Activated CD8-positive, alpha-beta T cell treated with anti-CD3 and anti-CD28 coated beads, Interleukin-2, amount 10 ng/mL, durations not matched to agents 7 days and 5 days (primary cell): ENCODE measurements at regions of chr14 and their contacts with region 1.

Region 1: GRCh38 chr14:61329478-61330051 is 8.2 kb downstream of the PRKCH start:
- DNase-seq: no peak
- ATAC-seq: no peak
- H3K4me3 Mint-ChIP-seq: peak overlapping the region; percentile 94
- H3K27ac Mint-ChIP-seq: peak overlapping the region; percentile 85
- H3K4me1 Mint-ChIP-seq: peaks cover 77% of the 10 kb centered on the region
- H3K27me3 Mint-ChIP-seq: no peaks in the 10 kb centered on the region

Region 2: DNA sequence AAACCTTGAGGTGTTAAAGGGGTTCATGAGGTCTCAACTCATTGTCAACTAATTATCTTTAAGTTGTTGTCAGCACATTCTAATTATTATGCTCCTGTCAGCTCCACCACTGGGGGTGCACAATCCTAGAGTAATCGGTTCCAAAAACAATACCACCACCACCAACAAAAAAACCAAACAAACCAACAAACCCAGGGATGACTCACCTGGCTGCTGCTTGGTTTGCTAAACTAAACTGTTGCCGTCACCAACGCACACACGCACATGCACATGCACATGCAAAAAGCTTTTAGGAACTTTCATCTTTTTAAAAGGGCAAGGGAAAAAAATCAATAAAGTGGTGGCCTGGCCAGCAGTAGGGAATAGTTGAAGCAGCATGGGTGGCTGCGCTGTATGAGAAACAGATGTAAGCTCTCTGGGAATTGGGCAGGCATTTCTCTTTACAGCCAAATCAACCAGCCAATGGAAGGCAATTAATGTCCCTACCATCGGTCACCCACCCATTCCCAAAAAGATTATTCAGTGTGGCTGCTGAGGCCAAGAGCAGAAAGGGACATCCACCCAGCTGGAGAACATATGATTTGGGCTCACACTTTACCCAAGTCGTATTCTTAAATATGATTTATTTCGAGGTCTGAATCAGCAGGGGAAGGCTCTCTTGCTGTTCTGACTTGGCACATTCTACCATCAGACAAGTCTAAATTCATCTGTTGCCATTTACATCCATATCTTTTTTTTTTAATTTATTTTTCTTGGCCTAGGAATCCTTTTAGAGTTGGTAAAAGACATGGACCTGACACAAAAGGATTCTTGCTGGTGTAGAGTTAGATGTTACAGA is 68.4 kb before region 1 on chr14:
- CTCF ChIA-PET with region 1: no interaction called
- POLR2A ChIA-PET with region 1: no interaction called
- DNase-seq: no peak
- ATAC-seq: no peak
- H3K4me3 Mint-ChIP-seq: no peak overlapping the region
- H3K27ac Mint-ChIP-seq: no peak overlapping the region
- H3K4me1 Mint-ChIP-seq: no peaks in the 10 kb centered on the region
- H3K27me3 Mint-ChIP-seq: peaks cover 48% of the 10 kb centered on the region

Region 3: GRCh38 chr14:61342486-61342885 is 12.9 kb after region 1 on chr14:
- CTCF ChIA-PET with region 1: interaction called, 42 read pairs
- POLR2A ChIA-PET with region 1: interaction called, 223 read pairs
- DNase-seq: peak; percentile 92
- ATAC-seq: peak; percentile 64
- H3K4me3 Mint-ChIP-seq: peak overlapping the region; percentile 72
- H3K27ac Mint-ChIP-seq: peak overlapping the region; percentile 90
- H3K4me1 Mint-ChIP-seq: peaks cover 95% of the 10 kb centered on the region
- H3K27me3 Mint-ChIP-seq: no peaks in the 10 kb centered on the region

Region 4: DNA sequence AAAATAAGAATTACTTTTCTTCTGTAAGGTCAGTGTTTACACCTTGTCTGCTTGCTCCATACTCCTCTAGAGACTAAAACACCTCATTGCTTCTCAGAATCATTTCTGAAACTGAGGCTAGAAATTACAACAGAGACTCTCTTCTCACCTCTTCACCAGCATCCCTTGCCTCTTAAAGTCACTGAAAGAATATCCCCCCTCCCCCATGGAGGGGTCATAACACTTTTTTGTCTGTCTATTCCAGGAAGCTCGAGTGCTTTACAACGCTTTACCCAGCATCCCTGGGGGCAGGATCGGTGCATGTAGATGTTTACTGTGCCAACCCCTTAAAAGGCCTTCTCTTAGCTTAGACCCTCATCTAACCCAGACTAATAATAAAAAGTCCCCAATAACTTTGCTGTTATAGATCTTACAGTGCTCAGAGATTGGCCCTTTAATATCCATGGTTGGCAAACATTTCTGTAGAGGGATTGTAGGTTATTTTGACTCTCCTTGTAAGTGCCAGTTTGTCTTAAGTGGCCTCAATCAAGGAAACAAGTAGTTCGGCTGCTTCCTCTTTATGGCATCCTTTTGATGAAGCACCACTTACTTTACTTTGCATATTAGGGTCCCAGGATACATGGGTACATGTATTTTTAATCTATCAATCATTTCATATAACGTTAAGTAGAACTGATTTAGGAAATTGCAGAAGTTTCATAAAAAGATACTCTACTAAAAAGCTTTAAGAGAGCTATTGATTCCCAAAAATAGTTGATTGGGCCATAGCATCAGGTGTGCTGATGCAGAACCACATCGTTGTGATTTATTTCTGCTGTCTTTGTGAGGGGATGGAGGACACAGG is 21.1 kb after region 1 on chr14:
- CTCF ChIA-PET with region 1: interaction called, 42 read pairs
- POLR2A ChIA-PET with region 1: interaction called, 177 read pairs
- DNase-seq: peak; percentile 62
- ATAC-seq: peak; percentile 38
- H3K4me3 Mint-ChIP-seq: peak overlapping the region; percentile 49
- H3K27ac Mint-ChIP-seq: peak overlapping the region; percentile 86
- H3K4me1 Mint-ChIP-seq: peaks cover 95% of the 10 kb centered on the region
- H3K27me3 Mint-ChIP-seq: no peaks in the 10 kb centered on the region